Activated CD4-positive, alpha-beta T cell treated with anti-CD3 and anti-CD28 coated beads, Interleukin-2, amount 10 ng/mL, durations not matched to agents 24 days and 14 days (primary cell): ENCODE measurements at regions of chr7 and their contacts with region 1.

Region 1: DNA sequence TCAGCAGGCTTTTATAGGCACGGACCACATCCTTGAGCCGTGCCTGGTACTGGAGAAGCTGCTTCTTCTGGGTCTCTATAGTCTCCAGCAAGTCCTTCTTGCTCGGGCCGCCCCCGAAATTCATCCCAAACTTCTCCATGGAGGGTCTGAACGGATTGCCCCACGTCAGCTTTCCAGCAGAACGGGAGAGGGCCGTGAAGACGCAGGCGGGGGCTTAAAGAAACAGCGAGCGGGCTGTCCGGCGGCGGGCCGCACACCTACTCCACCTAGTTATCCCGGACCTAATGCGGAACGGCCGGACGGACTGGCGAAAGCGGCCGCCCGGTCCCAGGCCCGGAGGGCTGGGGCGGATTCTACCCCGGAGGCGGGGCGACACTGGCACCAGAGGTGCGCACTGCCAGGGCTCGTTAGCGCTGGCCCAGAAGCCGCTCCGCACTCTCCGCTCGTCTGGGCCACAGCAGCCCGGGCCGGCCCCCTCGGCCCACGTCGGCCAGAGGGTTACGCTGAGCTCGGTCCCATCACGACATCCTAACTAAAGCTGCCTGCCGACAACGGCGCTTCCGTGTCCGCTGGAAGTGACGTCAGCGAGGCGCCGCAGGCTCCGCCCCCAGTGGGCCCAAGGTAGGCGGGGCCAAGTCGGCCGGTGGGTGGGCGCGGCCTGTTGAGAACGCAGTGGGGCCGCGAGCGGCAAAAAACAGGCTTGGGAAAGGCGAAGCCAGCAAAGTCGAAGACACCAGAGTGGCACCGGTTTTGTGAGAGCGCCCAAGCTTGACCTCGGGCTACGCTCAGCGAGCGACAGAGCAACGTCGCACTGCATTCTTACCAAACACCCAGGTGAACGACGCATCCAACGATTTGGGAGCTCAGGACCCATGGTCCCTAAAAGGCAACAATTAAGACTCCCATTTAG is at the start of gene GCC1:
- DNase-seq: peak; percentile 99
- H3K4me3 Mint-ChIP-seq: peak within 1 kb of the TSS; percentile 94
- H3K27ac Mint-ChIP-seq: peak within 1 kb of the TSS; percentile 89
- H3K4me1 Mint-ChIP-seq: peaks cover 43% of the 10 kb centered on the region
- H3K27me3 Mint-ChIP-seq: no peaks in the 10 kb centered on the region
- total RNA-seq, gene GCC1: 14.8 and 15.6 TPM in 2 replicates

Region 2: GRCh38 chr7:127651556-127652332 is 66.4 kb after region 1 on chr7 and contains the start of gene SND1:
- intact Hi-C with region 1: loop called (anchors 1 kb)
- DNase-seq: peak; percentile 100
- H3K4me3 Mint-ChIP-seq: peak within 1 kb of the TSS; percentile 99
- H3K27ac Mint-ChIP-seq: peak within 1 kb of the TSS; percentile 97
- H3K4me1 Mint-ChIP-seq: peaks cover 31% of the 10 kb centered on the region
- H3K27me3 Mint-ChIP-seq: peaks cover 6% of the 10 kb centered on the region
- total RNA-seq, gene SND1: 275 and 295 TPM in 2 replicates